ENCODE measurements at regions of chr19 and their contacts with region 1.

Region 1: GRCh38 chr19:47483800-47484690 is at the start of gene KPTN:
- DNase-seq: peak; percentile 91
- H3K4me3 Mint-ChIP-seq: peak within 1 kb of the TSS; percentile 96
- H3K27ac Mint-ChIP-seq: peak within 1 kb of the TSS; percentile 94
- H3K4me1 Mint-ChIP-seq: peaks cover 34% of the 10 kb centered on the region
- H3K27me3 Mint-ChIP-seq: no peaks in the 10 kb centered on the region
- total RNA-seq, gene KPTN: 6.6 to 7.7 TPM

Region 2: GRCh38 chr19:47231215-47231984 is 252.6 kb before region 1 on chr19:
- CTCF ChIA-PET with region 1: no interaction called
- POLR2A ChIA-PET with region 1: no interaction called
- DNase-seq: peak; percentile 92
- H3K4me3 Mint-ChIP-seq: peak overlapping the region; percentile 63
- H3K27ac Mint-ChIP-seq: peak overlapping the region; percentile 85
- H3K4me1 Mint-ChIP-seq: peaks cover 29% of the 10 kb centered on the region
- H3K27me3 Mint-ChIP-seq: no peaks in the 10 kb centered on the region

Region 3: GRCh38 chr19:47357788-47358680 is 126.0 kb before region 1 on chr19:
- CTCF ChIA-PET with region 1: no interaction called
- POLR2A ChIA-PET with region 1: no interaction called
- DNase-seq: no peak
- H3K4me3 Mint-ChIP-seq: no peak overlapping the region
- H3K27ac Mint-ChIP-seq: no peak overlapping the region
- H3K4me1 Mint-ChIP-seq: no peaks in the 10 kb centered on the region
- H3K27me3 Mint-ChIP-seq: no peaks in the 10 kb centered on the region

Region 4: DNA sequence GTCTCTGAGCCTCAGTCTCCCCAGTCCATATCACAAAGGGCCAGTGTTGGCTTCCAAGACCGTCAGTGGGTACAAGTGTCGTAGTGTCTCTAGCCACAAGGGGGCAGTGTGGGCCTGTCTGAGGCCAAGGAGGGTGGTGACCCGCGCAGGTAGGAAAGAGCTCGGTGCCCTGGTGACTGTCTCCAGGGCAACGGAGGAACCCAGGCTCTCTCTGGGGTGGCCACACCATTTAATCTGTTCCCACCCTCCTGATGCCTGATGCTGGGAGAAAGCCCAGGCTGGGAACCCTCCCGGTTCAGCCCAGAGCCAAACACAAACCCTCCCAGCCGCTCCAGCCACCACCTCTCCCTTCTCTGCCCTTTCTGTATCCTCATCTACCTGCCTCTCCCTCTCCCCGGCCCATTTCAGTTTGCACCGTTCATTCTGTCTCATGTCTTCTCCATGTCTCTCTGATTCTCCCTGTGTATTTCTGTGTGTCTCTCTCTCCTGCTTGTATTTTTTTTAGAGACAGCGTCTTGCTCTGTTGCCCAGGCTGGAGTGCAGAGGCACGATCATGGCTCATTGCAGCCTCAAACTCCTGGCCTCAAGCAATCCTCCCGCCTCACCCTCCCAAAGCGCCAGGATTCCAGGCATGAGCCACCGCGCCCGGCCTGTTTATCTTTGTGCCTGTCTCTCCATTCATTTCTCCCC is 47.2 kb before region 1 on chr19:
- CTCF ChIA-PET with region 1: interaction called, 23 read pairs
- POLR2A ChIA-PET with region 1: interaction called, 6 read pairs
- DNase-seq: peak; percentile 87
- H3K4me3 Mint-ChIP-seq: peak overlapping the region; percentile 13
- H3K27ac Mint-ChIP-seq: no peak overlapping the region
- H3K4me1 Mint-ChIP-seq: peaks cover 51% of the 10 kb centered on the region
- H3K27me3 Mint-ChIP-seq: peaks cover 29% of the 10 kb centered on the region

Region 5: DNA sequence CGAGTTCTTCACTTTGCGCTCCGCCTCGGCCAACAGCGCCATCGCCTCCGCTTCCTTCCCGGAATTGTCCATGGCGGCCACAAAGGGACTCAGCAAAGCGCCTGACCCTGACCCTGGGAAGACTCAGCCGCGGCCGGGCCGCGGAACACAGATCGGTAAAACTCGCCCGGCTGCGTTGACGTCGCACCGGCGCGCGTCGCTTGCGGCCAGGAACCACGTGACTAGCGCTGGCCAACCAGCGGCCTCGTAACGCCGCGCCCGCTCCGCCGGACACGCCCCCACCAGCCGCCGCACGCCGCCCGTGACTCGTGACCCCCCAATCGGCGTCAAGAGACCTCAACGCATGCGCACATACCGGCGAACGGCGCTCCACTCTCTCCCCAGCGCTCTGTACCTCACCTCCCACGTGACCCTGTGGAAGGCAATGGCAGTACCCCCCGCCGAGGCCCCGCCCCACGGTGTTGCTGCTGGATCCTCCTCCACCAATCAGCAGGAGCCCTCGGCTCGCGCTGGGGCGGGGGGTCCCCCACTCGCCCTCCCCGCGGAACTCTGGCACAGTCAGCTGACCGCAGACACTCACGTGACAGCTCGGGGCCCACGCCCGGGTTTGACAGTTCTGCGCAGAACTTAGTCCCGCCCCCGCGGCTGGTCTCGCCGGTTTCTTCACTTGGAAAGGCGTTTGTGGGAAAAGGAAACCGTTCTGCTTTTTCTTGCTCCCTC is 31.0 kb after region 1 on chr19 and contains the start of gene NAPA:
- CTCF ChIA-PET with region 1: interaction called, 33 read pairs
- POLR2A ChIA-PET with region 1: interaction called, 20 read pairs
- DNase-seq: peak; percentile 100
- H3K4me3 Mint-ChIP-seq: peak within 1 kb of the TSS; percentile 98
- H3K27ac Mint-ChIP-seq: peak within 1 kb of the TSS; percentile 97
- H3K4me1 Mint-ChIP-seq: peaks cover 88% of the 10 kb centered on the region
- H3K27me3 Mint-ChIP-seq: no peaks in the 10 kb centered on the region
- total RNA-seq, gene NAPA: 117 to 119 TPM

Region 6: DNA sequence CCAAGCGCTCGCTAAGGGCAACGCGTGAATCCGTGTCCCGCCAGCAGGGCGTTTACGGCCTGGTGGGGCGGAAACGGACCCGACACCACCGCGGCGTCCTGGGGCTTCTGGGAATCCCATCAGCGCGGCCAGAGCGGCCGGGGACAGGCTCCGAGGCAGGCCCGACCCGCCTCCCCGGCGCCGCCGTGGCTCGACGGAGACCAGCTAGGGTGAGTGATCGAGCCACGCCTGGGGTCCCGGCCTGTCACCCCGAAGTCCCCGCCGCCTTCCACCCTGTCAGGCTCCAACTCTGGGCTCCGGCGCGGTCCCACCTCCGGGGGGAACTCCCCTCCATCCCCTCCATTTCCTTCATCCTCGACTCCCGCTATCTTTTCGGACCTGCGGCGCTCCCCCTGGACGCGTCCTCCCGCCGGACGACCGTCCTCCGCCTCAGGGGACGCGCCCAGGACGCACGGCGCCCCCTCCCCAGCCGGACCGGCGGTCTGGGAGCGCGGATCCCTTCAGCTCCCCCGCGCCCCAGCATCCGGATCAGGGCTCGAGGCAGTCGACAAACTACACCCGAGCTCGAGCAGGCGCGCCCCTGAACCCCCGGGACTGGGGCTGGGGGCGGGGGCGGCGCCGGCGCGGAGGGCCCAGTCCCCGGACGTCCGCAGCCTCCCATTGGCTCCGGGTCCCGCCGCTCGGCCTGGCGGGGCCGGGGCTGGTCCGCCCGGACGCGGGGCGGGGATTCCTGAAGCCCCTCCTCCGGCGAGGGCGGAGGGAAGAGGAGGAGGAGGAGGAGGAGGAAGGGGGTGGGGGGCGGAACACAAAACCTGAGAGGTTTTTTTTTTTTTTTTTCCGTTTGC is 124.3 kb after region 1 on chr19:
- CTCF ChIA-PET with region 1: interaction called, 7 read pairs
- POLR2A ChIA-PET with region 1: interaction called, 12 read pairs
- DNase-seq: peak; percentile 97
- H3K4me3 Mint-ChIP-seq: peak overlapping the region; percentile 75
- H3K27ac Mint-ChIP-seq: peak overlapping the region; percentile 78
- H3K4me1 Mint-ChIP-seq: peaks cover 33% of the 10 kb centered on the region
- H3K27me3 Mint-ChIP-seq: peaks cover 5% of the 10 kb centered on the region

Region 7: GRCh38 chr19:47745010-47745901 is 261.2 kb after region 1 on chr19 and contains the start of gene NOP53:
- CTCF ChIA-PET with region 1: interaction called, 10 read pairs
- POLR2A ChIA-PET with region 1: interaction called, 3 read pairs
- DNase-seq: peak; percentile 97
- H3K4me3 Mint-ChIP-seq: peak within 1 kb of the TSS; percentile 84
- H3K27ac Mint-ChIP-seq: peak within 1 kb of the TSS; percentile 94
- H3K4me1 Mint-ChIP-seq: peaks cover 53% of the 10 kb centered on the region
- H3K27me3 Mint-ChIP-seq: no peaks in the 10 kb centered on the region
- total RNA-seq, gene NOP53: 257 to 271 TPM